ENCODE measurements at regions of chr5 and their contacts with region 1.

Region 1: DNA sequence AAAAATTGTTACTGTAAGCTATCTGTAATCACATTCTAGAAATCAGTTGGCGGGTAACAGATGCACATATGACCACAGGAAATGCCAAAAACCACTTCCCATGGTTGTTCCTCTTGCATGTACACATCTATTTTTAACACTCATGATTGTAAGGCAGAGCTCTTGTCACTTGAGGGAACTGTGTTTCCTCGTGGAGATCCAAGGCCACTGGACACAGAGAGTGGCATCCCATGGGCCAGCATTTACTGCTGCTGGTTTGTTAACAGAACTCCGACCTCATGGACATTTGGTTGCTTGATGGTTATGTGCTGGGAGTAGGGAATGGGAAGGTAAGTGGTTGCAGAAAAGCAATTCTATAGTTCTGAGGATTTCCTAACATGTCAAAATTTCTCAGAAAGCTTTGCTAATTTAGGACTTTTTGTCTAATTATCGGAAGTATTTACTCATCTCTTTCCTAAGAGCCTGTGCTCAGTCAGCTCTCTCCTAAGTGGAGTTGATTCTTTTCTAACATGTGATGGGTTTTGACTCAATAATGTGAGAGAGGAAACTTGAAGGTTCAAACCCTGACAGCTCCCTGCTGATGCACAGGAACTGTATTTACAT is 202.0 kb upstream of the NR3C1 start:
- DNase-seq: peak; percentile 44
- H3K4me3 Mint-ChIP-seq: peak overlapping the region; percentile 68
- H3K27ac Mint-ChIP-seq: peak overlapping the region; percentile 92
- H3K4me1 Mint-ChIP-seq: peaks cover 44% of the 10 kb centered on the region
- H3K27me3 Mint-ChIP-seq: no peaks in the 10 kb centered on the region

Region 2: DNA sequence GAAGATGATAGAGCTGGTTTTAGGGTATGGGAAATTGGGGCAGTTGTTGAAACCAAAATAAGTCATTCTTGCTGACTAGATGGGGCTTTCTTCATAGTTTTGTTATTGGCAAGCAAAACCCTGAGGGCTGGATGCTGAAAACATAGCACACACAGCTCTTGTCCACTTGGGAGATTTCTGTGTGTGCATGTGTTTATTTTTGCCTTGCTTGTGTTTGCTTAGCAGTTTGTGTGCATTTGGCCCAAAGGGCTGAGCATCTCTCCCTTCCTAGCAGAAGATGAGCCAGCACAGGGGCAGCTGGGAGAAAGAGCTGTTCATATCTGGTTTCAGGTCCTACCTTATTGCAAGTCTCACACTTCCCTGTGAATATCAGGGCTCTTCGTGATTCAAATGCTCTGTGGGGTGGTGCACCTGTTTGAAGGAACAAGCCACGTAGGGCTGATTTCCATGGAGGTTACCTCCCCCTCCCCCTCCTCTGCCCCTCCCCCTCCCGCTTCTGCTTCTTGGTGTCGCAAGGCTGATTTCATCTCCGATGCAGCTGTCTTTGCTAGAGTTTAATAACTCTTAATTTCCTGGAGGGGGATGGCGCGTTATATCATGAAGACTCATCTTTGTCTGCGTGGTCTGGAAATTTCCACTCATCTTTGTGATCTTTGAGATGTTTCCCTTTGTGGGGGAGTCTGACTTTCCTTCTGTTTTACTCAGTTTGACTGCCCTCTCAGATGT is 538.8 kb before region 1 on chr5:
- intact Hi-C with region 1: loop called (anchors 5 kb)
- DNase-seq: no peak
- H3K4me3 Mint-ChIP-seq: no peak overlapping the region
- H3K27ac Mint-ChIP-seq: peak overlapping the region; percentile 90
- H3K4me1 Mint-ChIP-seq: peaks cover 51% of the 10 kb centered on the region
- H3K27me3 Mint-ChIP-seq: no peaks in the 10 kb centered on the region

Region 3: GRCh38 chr5:143355720-143356119 is 249.8 kb before region 1 on chr5:
- intact Hi-C with region 1: loop called (anchors 5 kb)
- DNase-seq: no peak
- H3K4me3 Mint-ChIP-seq: no peak overlapping the region
- H3K27ac Mint-ChIP-seq: no peak overlapping the region
- H3K4me1 Mint-ChIP-seq: peaks cover 55% of the 10 kb centered on the region
- H3K27me3 Mint-ChIP-seq: no peaks in the 10 kb centered on the region

Region 4: DNA sequence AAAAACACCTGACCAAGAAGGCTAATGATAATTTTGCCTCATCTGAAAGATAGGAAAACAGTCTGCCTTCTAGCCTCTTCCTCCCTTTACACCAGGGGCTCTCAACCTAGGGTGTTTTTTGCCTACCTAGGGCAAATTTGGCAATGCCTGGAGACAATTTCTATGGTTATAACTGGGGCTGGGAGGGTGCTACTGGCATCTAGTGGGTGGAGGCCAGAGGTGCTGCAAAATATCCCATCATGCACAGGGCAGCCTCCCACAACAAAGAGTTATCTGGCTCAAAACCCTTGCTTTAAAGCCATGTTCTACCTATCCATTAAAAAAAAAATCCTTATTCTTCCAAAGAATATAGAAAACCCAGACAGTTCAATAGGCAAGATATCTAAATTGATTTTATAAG is 157.0 kb before region 1 on chr5:
- intact Hi-C with region 1: loop called (anchors 5 kb)
- DNase-seq: no peak
- H3K4me3 Mint-ChIP-seq: no peak overlapping the region
- H3K27ac Mint-ChIP-seq: no peak overlapping the region
- H3K4me1 Mint-ChIP-seq: peaks cover 27% of the 10 kb centered on the region
- H3K27me3 Mint-ChIP-seq: no peaks in the 10 kb centered on the region

Region 5: DNA sequence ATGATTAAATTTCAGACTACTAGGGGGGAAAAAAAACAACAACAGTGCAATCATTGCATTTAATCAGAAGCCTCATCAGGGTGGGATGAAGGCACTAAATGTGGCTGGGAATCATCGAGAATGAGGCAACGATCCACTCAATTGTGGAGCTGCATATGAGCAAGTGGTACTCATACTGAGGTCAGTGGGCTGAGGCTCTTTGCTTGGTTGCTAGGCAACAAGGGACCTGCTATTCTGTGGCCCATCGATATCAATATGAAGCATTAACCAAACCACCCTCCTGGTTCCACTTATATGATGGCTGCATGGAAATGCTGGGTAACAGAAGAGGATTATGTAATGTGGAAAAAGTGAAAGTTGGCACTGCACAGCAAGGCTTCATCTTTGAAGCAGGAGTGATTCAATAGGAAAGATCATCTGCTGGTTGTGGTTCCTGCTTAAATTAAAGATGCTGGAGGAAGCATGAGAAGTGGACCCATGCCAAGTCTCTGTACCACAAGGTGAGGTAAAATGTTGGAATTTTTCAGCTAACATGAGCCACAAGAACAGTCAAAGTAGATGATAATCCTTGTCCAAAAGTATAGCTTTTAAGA is 46.7 kb after region 1 on chr5:
- intact Hi-C with region 1: loop called (anchors 1 kb)
- DNase-seq: no peak
- H3K4me3 Mint-ChIP-seq: no peak overlapping the region
- H3K27ac Mint-ChIP-seq: no peak overlapping the region
- H3K4me1 Mint-ChIP-seq: peaks cover 21% of the 10 kb centered on the region
- H3K27me3 Mint-ChIP-seq: peaks cover 2% of the 10 kb centered on the region

Region 6: GRCh38 chr5:143758750-143759149 is 153.2 kb after region 1 on chr5:
- intact Hi-C with region 1: loop called (anchors 5 kb)
- DNase-seq: no peak
- H3K4me3 Mint-ChIP-seq: no peak overlapping the region
- H3K27ac Mint-ChIP-seq: peak overlapping the region; percentile 29
- H3K4me1 Mint-ChIP-seq: peaks cover 24% of the 10 kb centered on the region
- H3K27me3 Mint-ChIP-seq: peaks cover 2% of the 10 kb centered on the region